Naive thymus-derived CD8-positive, alpha-beta T cell (primary cell): ENCODE measurements at regions of chr1 and their contacts with region 1.

Region 1: GRCh38 chr1:23777979-23778814 is at the start of gene PITHD1:
- DNase-seq: peak; percentile 70 to 87 (median 80)
- ATAC-seq: peak; percentile 86 to 90
- H3K4me3 Mint-ChIP-seq: peak within 1 kb of the TSS; percentile 84 to 97 (median 94)
- H3K27ac Mint-ChIP-seq: peak within 1 kb of the TSS; percentile 86 to 99 (median 97)
- H3K4me1 Mint-ChIP-seq: peaks cover 15 to 64% (median 36%) of the 10 kb centered on the region in 4 donors
- H3K27me3 Mint-ChIP-seq: no peaks in the 10 kb centered on the region
- polyA plus RNA-seq, gene PITHD1: 68.1 to 80.6 (median 74.3) TPM

Region 2: GRCh38 chr1:23193390-23194118 is 584.6 kb before region 1 on chr1:
- POLR2A ChIA-PET with region 1: interaction called, 13 read pairs
- DNase-seq: no peak
- ATAC-seq: no peak
- H3K4me3 Mint-ChIP-seq: no peak overlapping the region
- H3K27ac Mint-ChIP-seq: peak overlapping the region in 1 of 10 donors; percentile 6
- H3K4me1 Mint-ChIP-seq: no peaks in the 10 kb centered on the region
- H3K27me3 Mint-ChIP-seq: peaks cover 3 to 27% (median 14%) of the 10 kb centered on the region in 5 donors

Region 3: GRCh38 chr1:23790696-23791515 is 12.7 kb after region 1 on chr1 and contains the start of gene LYPLA2:
- POLR2A ChIA-PET with region 1: interaction called, 42 read pairs
- DNase-seq: peak; percentile 73 to 90 (median 80)
- ATAC-seq: peak; percentile 89 to 90
- H3K4me3 Mint-ChIP-seq: peak within 1 kb of the TSS; percentile 83 to 100 (median 96)
- H3K27ac Mint-ChIP-seq: peak within 1 kb of the TSS; percentile 93 to 99 (median 96)
- H3K4me1 Mint-ChIP-seq: peaks cover 14 to 39% (median 28%) of the 10 kb centered on the region in 4 donors
- H3K27me3 Mint-ChIP-seq: no peaks in the 10 kb centered on the region
- polyA plus RNA-seq, gene LYPLA2: 90.3 to 104 (median 101) TPM

Region 4: GRCh38 chr1:23800400-23801337 is 22.5 kb after region 1 on chr1 and contains the start of gene GALE:
- POLR2A ChIA-PET with region 1: interaction called, 42 read pairs
- DNase-seq: peak; percentile 91 to 98 (median 95)
- ATAC-seq: peak; percentile 88 to 89
- H3K4me3 Mint-ChIP-seq: peak within 1 kb of the TSS; percentile 75 to 97 (median 90)
- H3K27ac Mint-ChIP-seq: peak within 1 kb of the TSS; percentile 81 to 95 (median 92)
- H3K4me1 Mint-ChIP-seq: peaks cover 6 to 22% (median 16%) of the 10 kb centered on the region in 4 donors
- H3K27me3 Mint-ChIP-seq: peaks cover 0 to 1% (median 0%) of the 10 kb centered on the region in 5 donors
- polyA plus RNA-seq, gene GALE: 8.0 to 12.7 (median 12.3) TPM